Common myeloid progenitor, CD34-positive (primary cell): ENCODE measurements at regions of chr18 and their contacts with region 1.

Region 1: GRCh38 chr18:48771641-48772375 is 179.0 kb downstream of the SMAD7 start:
- DNase-seq: peak; percentile 58 to 93 (median 90)
- H3K4me3 ChIP-seq: peak overlapping the region in 2 of 7 experiments; percentile 9 to 23
- H3K27ac ChIP-seq: no peak overlapping the region
- H3K4me1 ChIP-seq: peaks cover 0 to 27% (median 15%) of the 10 kb centered on the region in 4 experiments
- H3K27me3 ChIP-seq: no peaks in the 10 kb centered on the region

Region 2: GRCh38 chr18:48742706-48743475 is 28.9 kb before region 1 on chr18:
- CTCF ChIA-PET with region 1: no interaction called
- POLR2A ChIA-PET with region 1: no interaction called
- DNase-seq: no peak
- H3K4me3 ChIP-seq: no peak overlapping the region
- H3K27ac ChIP-seq: no peak overlapping the region
- H3K4me1 ChIP-seq: no peaks in the 10 kb centered on the region
- H3K27me3 ChIP-seq: no peaks in the 10 kb centered on the region

Region 3: GRCh38 chr18:48790226-48790874 is 18.5 kb after region 1 on chr18:
- CTCF ChIA-PET with region 1: interaction called, 10 read pairs
- POLR2A ChIA-PET with region 1: no interaction called
- DNase-seq: no peak
- H3K4me3 ChIP-seq: no peak overlapping the region
- H3K27ac ChIP-seq: no peak overlapping the region
- H3K4me1 ChIP-seq: peaks cover 0 to 7% (median 1%) of the 10 kb centered on the region in 4 experiments
- H3K27me3 ChIP-seq: no peaks in the 10 kb centered on the region